ENCODE measurements at regions of chr4 and their contacts with region 1.

Region 1: DNA sequence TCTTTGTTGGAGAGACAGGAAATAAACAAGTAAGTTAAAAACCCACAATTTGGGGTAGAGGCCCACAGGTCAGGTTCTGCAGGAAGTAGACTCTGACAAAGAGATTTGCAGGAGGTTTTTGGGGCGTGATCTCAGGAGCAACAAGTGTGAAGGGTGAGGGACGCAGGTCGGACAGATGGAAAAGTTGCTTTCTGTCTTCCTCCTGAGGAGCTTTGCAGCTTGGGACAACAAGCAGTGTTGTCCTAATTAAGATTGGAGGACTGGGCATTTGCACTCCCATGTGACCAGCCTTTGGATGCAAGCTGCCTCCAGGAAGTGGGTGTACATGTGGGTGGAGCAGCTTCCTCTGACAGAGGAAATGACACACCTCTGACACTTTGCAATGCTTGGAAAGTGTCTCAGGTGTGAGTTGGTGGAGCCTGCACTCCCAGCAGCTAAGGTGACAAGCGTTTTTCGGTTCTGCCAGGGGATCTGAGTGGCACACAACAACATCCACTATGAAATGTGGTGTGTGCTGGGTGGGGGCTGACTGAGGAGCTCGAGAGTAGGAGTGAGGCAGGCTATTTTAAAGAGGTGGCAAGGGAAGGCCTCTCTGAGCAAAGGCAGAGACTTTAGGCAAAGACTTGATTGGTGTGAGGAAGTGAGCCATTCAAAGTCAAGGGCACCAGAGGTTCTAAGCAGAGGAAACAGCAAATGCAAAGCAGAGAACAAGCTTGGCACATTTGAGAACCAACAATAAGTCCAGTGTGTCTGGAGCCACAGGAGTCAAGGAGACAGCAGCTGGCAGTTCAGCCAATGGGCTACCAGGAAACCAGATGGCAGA is 339.8 kb upstream of the GATB start:
- DNase-seq: peak; percentile 89
- H3K4me3 Mint-ChIP-seq: peak overlapping the region; percentile 66
- H3K27ac Mint-ChIP-seq: peak overlapping the region; percentile 100
- H3K4me1 Mint-ChIP-seq: peaks cover 82% of the 10 kb centered on the region
- H3K27me3 Mint-ChIP-seq: no peaks in the 10 kb centered on the region

Region 2: GRCh38 chr4:152079543-152080293 is 20.9 kb before region 1 on chr4:
- CTCF ChIA-PET with region 1: no interaction called
- POLR2A ChIA-PET with region 1: interaction called, 10 read pairs
- DNase-seq: peak; percentile 61
- H3K4me3 Mint-ChIP-seq: peak overlapping the region; percentile 26
- H3K27ac Mint-ChIP-seq: peak overlapping the region; percentile 89
- H3K4me1 Mint-ChIP-seq: peaks cover 30% of the 10 kb centered on the region
- H3K27me3 Mint-ChIP-seq: no peaks in the 10 kb centered on the region

Region 3: DNA sequence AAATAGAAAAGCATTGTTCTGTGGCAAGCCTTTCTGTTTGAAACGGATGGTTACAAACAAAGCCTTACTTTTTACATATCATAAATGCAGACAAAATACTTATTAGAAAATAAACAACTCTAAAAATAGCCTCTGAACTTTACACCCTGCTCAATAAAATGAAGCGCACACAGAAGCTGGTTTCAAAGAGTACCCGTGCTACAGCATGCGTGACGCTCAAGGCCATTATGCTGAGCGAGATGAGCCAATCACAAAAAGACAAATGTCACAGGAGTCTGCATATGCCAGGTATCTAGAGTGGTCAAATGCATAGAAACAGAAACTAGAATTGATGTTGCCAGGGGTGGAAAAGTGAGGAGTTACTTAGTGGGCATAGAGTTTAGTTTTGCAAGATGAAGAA is 13.3 kb before region 1 on chr4:
- CTCF ChIA-PET with region 1: interaction called, 6 read pairs
- POLR2A ChIA-PET with region 1: interaction called, 11 read pairs
- DNase-seq: no peak
- H3K4me3 Mint-ChIP-seq: no peak overlapping the region
- H3K27ac Mint-ChIP-seq: no peak overlapping the region
- H3K4me1 Mint-ChIP-seq: peaks cover 12% of the 10 kb centered on the region
- H3K27me3 Mint-ChIP-seq: no peaks in the 10 kb centered on the region

Region 4: GRCh38 chr4:152112887-152113286 is 12.3 kb after region 1 on chr4:
- CTCF ChIA-PET with region 1: interaction called, 4 read pairs
- POLR2A ChIA-PET with region 1: interaction called, 29 read pairs
- DNase-seq: no peak
- H3K4me3 Mint-ChIP-seq: no peak overlapping the region
- H3K27ac Mint-ChIP-seq: no peak overlapping the region
- H3K4me1 Mint-ChIP-seq: peaks cover 55% of the 10 kb centered on the region
- H3K27me3 Mint-ChIP-seq: no peaks in the 10 kb centered on the region

Region 5: DNA sequence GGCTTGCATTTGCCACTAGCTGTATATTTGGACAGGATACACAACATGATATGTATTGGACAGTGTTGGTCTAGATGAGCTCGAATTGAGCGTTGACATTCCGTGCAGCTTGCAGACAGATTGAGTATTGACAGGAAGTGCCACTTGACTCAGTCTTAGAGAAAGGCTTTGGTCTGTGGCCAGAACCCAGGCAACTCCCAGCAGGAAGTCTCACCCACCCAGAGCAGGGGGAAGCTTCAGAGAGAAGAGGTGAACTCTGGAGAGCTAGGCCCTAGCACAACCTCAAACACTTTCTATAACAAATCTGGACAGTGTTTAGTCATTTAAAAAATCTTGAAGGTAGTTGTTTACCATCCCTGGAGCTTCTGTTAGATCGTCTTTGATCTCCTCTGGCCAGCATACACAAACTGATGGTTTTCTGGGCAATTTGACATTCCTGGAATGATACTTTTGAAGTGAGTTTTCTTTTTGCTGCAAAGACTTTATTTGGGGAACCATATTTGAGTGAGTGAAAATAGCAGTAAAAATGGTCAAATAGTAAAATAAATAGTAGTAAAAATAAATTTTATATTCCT is 154.9 kb after region 1 on chr4:
- CTCF ChIA-PET with region 1: no interaction called
- POLR2A ChIA-PET with region 1: interaction called, 21 read pairs
- DNase-seq: peak; percentile 83
- H3K4me3 Mint-ChIP-seq: peak overlapping the region; percentile 6
- H3K27ac Mint-ChIP-seq: no peak overlapping the region
- H3K4me1 Mint-ChIP-seq: peaks cover 19% of the 10 kb centered on the region
- H3K27me3 Mint-ChIP-seq: peaks cover 3% of the 10 kb centered on the region